Tibial artery (tissue), 4 donors: ENCODE measurements at regions of chr2 and their contacts with region 1.

Region 1: GRCh38 chr2:48248241-48248933 is 281.6 kb upstream of the STON1 start:
- DNase-seq: no peak
- H3K4me3 ChIP-seq: no peak overlapping the region
- H3K27ac ChIP-seq: peak overlapping the region; percentile 3 to 16
- H3K4me1 ChIP-seq: peaks cover 0 to 26% (median 12%) of the 10 kb centered on the region in 4 donors
- H3K27me3 ChIP-seq: no peaks in the 10 kb centered on the region
- CTCF ChIP-seq: no peak

Region 2: GRCh38 chr2:48070415-48070814 is 178.0 kb before region 1 on chr2:
- intact Hi-C with region 1: no loop called
- DNase-seq: no peak
- H3K4me3 ChIP-seq: no peak overlapping the region
- H3K27ac ChIP-seq: no peak overlapping the region
- H3K4me1 ChIP-seq: no peaks in the 10 kb centered on the region
- H3K27me3 ChIP-seq: no peaks in the 10 kb centered on the region
- CTCF ChIP-seq: no peak

Region 3: GRCh38 chr2:48292393-48292792 is 44.0 kb after region 1 on chr2:
- intact Hi-C with region 1: loop called (anchors 10 kb)
- DNase-seq: no peak
- H3K4me3 ChIP-seq: no peak overlapping the region
- H3K27ac ChIP-seq: no peak overlapping the region
- H3K4me1 ChIP-seq: no peaks in the 10 kb centered on the region
- H3K27me3 ChIP-seq: no peaks in the 10 kb centered on the region
- CTCF ChIP-seq: no peak

Region 4: GRCh38 chr2:49770919-49771318 is 1522.5 kb after region 1 on chr2:
- intact Hi-C with region 1: no loop called
- DNase-seq: no peak
- H3K4me3 ChIP-seq: no peak overlapping the region
- H3K27ac ChIP-seq: no peak overlapping the region
- H3K4me1 ChIP-seq: no peaks in the 10 kb centered on the region
- H3K27me3 ChIP-seq: no peaks in the 10 kb centered on the region
- CTCF ChIP-seq: no peak